ENCODE measurements at regions of chr17 and their contacts with region 1.

Region 1: GRCh38 chr17:2700030-2700515 is 11.5 kb downstream of the CLUH start:
- DNase-seq: no peak
- H3K4me3 ChIP-seq: no peak overlapping the region
- H3K27ac ChIP-seq: no peak overlapping the region
- H3K27me3 ChIP-seq: no peaks in the 10 kb centered on the region
- CTCF ChIP-seq: no peak

Region 2: GRCh38 chr17:2571523-2572303 is 128.4 kb before region 1 on chr17:
- CTCF ChIA-PET with region 1: no interaction called
- POLR2A ChIA-PET with region 1: no interaction called
- DNase-seq: no peak
- H3K4me3 ChIP-seq: no peak overlapping the region
- H3K27ac ChIP-seq: no peak overlapping the region
- H3K27me3 ChIP-seq: peaks cover 10% of the 10 kb centered on the region
- CTCF ChIP-seq: no peak

Region 3: GRCh38 chr17:3668279-3669085 is 968.4 kb after region 1 on chr17 and contains the starts of genes EMC6 and TAX1BP3:
- CTCF ChIA-PET with region 1: no interaction called
- POLR2A ChIA-PET with region 1: interaction called, 10 read pairs
- DNase-seq: peak; percentile 90
- H3K4me3 ChIP-seq: peak within 1 kb of the TSS; percentile 97
- H3K27ac ChIP-seq: peak within 1 kb of the TSS; percentile 99
- H3K27me3 ChIP-seq: no peaks in the 10 kb centered on the region
- CTCF ChIP-seq: no peak
- polyA plus RNA-seq, gene EMC6: 23.4 and 28.9 TPM in 2 replicates
- polyA plus RNA-seq, gene TAX1BP3: 163 and 178 TPM in 2 replicates